ENCODE measurements at regions of chr11 and their contacts with region 1.

Region 1: DNA sequence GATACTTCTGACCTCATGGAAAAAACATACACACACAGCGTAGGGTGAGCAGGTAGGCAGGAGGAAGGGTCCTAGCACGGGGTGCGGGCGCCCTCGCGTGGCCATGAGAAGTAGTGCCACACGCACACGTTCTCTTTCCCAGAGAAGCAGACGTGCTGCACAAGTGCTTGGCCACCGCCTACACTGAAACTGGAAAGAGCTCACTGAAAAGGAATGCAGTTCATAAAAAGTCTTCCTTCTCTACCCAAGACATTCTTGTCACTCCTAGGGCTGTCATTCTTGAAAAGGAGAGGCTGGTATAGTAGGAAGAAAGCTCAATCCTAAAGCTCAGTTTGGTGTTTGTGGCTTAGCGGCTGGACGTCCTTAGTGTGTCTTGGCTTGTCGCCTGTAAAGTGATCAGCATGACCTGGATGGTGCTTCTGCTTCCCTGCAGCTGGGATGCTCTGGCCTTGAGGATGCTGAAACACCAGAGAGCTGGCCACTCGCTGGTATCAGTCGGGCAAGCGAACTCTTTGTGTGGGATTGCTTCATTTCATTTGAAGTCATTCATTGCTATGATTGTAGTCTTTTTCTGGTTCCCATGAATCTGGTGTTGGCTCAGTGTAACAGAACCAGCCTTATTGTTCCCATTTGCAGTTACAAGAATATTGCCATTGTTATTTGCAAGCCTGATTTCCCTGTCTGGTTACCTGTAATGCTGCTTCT is 303.8 kb downstream of the NTM start:
- DNase-seq: peak; percentile 70
- H3K4me3 ChIP-seq: no peak overlapping the region
- H3K27ac ChIP-seq: no peak overlapping the region
- H3K4me1 ChIP-seq: no peaks in the 10 kb centered on the region
- H3K27me3 ChIP-seq: peaks cover 16% of the 10 kb centered on the region
- CTCF ChIP-seq: peak; percentile 97

Region 2: GRCh38 chr11:131064373-131064991 is 609.7 kb before region 1 on chr11:
- CTCF ChIA-PET with region 1: interaction called, 15 read pairs
- POLR2A ChIA-PET with region 1: no interaction called
- intact Hi-C with region 1: loop called (anchors 1 kb)
- DNase-seq: peak; percentile 76
- H3K4me3 ChIP-seq: no peak overlapping the region
- H3K27ac ChIP-seq: no peak overlapping the region
- H3K4me1 ChIP-seq: no peaks in the 10 kb centered on the region
- H3K27me3 ChIP-seq: peaks cover 80% of the 10 kb centered on the region
- CTCF ChIP-seq: peak; percentile 94

Region 3: GRCh38 chr11:131240421-131240820 is 433.8 kb before region 1 on chr11:
- CTCF ChIA-PET with region 1: no interaction called
- POLR2A ChIA-PET with region 1: no interaction called
- intact Hi-C with region 1: loop called (anchors 5 kb)
- DNase-seq: no peak
- H3K4me3 ChIP-seq: no peak overlapping the region
- H3K27ac ChIP-seq: no peak overlapping the region
- H3K4me1 ChIP-seq: no peaks in the 10 kb centered on the region
- H3K27me3 ChIP-seq: peaks cover 40% of the 10 kb centered on the region
- CTCF ChIP-seq: no peak

Region 4: GRCh38 chr11:131579932-131580387 is 94.2 kb before region 1 on chr11:
- CTCF ChIA-PET with region 1: no interaction called
- POLR2A ChIA-PET with region 1: no interaction called
- intact Hi-C with region 1: loop called (anchors 5 kb)
- DNase-seq: peak; percentile 68
- H3K4me3 ChIP-seq: no peak overlapping the region
- H3K27ac ChIP-seq: no peak overlapping the region
- H3K4me1 ChIP-seq: no peaks in the 10 kb centered on the region
- H3K27me3 ChIP-seq: peaks cover 73% of the 10 kb centered on the region
- CTCF ChIP-seq: peak; percentile 62

Region 5: DNA sequence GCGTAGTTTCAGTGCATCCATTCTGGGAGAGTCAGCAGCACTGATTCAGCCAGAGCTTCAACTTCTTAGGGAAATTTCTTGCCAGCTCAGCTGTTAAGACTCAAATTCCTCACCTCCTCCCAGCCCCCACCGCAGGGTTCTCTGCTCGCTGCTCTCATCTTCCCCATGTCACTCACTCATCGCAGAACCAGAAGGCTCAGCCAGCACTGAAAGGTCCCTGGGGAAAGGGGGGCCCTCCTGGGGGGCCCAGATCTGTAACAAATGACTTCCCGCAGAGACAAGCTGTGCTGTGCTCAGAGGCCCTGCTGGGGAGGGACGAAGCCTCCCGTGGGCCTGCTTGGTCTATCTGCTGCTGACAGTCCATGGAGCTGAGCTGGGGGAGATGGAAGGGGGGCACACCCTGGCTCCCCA is 83.1 kb before region 1 on chr11:
- CTCF ChIA-PET with region 1: no interaction called
- POLR2A ChIA-PET with region 1: no interaction called
- intact Hi-C with region 1: no loop called
- DNase-seq: peak; percentile 13
- H3K4me3 ChIP-seq: no peak overlapping the region
- H3K27ac ChIP-seq: no peak overlapping the region
- H3K4me1 ChIP-seq: no peaks in the 10 kb centered on the region
- H3K27me3 ChIP-seq: peaks cover 22% of the 10 kb centered on the region
- CTCF ChIP-seq: no peak